ENCODE measurements at regions of chr16 and their contacts with region 1.

Region 1: DNA sequence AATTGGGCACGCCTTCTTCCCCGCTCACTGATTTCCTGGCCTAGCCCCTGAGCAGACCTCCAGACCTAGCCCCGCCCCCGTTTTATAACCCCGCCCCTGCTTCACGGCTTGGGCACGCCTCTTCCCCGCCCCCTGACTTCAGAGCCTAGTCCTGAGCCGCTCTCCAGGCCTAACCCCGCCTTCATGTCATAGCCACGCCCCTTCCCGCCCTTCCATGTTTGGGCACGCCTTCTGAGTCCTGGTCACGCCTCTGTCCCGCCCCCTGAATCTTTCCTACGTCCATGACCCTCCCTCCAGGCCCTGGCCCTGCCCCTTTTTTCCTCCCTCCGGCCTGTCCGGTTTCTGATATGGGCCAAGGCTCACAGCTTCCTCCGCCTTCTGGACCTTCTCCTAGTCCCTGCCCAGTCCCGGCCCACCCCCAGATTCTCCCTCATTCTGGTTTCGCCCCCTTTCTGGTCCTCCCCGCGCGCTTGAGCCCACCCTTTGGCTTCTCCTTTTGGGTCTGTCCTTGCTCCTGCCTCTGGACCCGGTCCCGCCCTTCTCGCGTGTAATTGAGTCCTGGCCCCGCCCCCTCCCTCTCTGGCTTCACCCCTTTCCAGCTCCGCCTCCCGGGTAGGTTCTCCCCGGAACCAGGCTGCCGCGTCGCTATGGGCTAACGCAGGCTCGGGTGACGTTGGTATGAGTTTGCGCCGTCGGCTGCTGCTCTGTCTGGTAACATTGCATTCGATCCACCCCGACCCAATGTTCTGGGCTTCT is 15.1 kb upstream of the EEF2K start:
- DNase-seq: peak; percentile 100
- H3K4me3 ChIP-seq: peak overlapping the region; percentile 65 to 72
- H3K27ac ChIP-seq: peak overlapping the region; percentile 81 to 94
- H3K4me1 ChIP-seq: peaks cover 0 to 33% (median 25%) of the 10 kb centered on the region in 4 donors
- H3K27me3 ChIP-seq: no peaks in the 10 kb centered on the region
- CTCF ChIP-seq: peak in 1 of 2 experiments; percentile 5

Region 2: GRCh38 chr16:22007509-22008214 is 183.3 kb before region 1 on chr16 and contains the start of gene MOSMO:
- intact Hi-C with region 1: loop called (anchors 5 kb)
- DNase-seq: peak; percentile 65 to 82
- H3K4me3 ChIP-seq: peak within 1 kb of the TSS; percentile 94 to 99
- H3K27ac ChIP-seq: peak within 1 kb of the TSS; percentile 76 to 96
- H3K4me1 ChIP-seq: peaks cover 0 to 31% (median 15%) of the 10 kb centered on the region in 4 donors
- H3K27me3 ChIP-seq: no peaks in the 10 kb centered on the region
- CTCF ChIP-seq: no peak

Region 3: DNA sequence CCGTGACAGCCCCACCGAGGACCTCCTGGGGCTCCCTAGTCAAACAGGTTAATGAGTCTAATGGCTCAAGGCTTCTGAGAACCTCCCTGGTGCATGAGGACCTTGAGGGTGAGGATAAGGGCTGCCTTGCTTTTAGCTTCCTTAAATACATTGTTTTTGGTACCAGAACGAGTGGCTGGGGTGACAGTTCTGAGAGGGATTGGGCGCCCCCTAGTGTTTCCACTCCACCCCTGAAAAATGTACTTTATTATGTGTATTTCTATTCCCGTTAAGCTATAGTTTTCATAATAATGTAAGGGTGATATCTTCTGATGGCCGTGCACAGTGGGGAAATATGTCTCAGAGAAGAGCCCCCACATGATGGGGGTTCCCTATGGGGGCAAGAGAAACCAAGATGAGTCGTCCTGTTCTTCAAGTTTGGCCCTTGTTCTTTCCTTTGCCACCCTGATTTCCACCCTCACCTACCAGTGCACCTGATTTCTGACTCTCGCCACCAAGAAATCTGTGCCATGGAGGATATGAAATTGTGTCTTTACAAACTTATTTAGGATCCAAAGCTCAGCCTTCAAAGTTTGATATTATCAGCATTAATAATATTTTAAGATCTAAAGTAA is 113.1 kb before region 1 on chr16:
- intact Hi-C with region 1: loop called (anchors 10 kb)
- DNase-seq: peak; percentile 60 to 69
- H3K4me3 ChIP-seq: no peak overlapping the region
- H3K27ac ChIP-seq: no peak overlapping the region
- H3K4me1 ChIP-seq: no peaks in the 10 kb centered on the region
- H3K27me3 ChIP-seq: no peaks in the 10 kb centered on the region
- CTCF ChIP-seq: peak; percentile 62 to 75

Region 4: GRCh38 chr16:22321339-22322001 is 130.5 kb after region 1 on chr16:
- intact Hi-C with region 1: no loop called
- DNase-seq: peak in 1 of 2 donors; percentile 60
- H3K4me3 ChIP-seq: no peak overlapping the region
- H3K27ac ChIP-seq: no peak overlapping the region
- H3K4me1 ChIP-seq: no peaks in the 10 kb centered on the region
- H3K27me3 ChIP-seq: no peaks in the 10 kb centered on the region
- CTCF ChIP-seq: peak; percentile 88 to 92

Region 5: DNA sequence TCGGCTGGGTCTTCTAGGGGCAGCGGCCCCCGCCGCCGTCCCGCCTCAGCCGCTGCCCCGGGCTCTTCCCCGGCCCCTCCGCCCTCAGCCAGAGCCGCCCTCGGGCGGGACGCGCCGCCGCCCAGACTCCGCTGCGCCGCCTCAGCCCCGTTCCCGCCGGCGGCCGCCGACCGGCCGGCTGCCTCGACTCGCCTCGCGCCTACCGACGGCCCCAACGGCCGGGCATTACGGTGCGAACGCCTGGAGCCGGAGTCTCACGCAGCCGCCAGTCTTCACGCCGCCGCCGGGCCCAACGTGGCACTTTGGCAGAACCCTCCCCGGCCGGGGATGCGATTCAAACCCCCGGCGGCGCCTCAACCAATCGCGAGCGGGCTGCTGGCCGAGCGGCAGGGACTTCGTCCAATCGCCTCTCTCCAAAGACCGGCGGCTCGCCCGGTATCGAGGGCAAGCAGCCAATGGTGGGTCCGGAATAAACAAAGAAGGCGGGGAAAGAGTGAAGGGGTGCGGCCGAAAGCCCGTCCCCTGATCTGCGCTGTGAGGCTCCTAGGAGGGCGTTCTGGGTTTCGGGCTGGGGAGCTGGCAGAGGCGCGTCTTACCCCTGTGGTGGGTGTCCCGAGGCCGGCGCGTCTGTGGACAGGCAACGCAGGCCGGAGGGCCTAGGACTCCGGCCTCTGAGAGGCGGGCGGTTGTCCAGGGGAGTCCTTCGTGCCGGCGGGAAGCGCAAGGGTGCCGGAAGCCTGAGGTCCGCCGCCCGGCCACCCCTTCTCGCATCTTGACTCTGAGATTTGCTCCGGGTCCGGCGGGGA is 183.6 kb after region 1 on chr16 and contains the start of gene CDR2:
- intact Hi-C with region 1: loop called (anchors 10 kb)
- DNase-seq: peak; percentile 98 to 99
- H3K4me3 ChIP-seq: peak within 1 kb of the TSS; percentile 79 to 92
- H3K27ac ChIP-seq: peak within 1 kb of the TSS; percentile 91 to 93
- H3K4me1 ChIP-seq: peaks cover 0 to 42% (median 31%) of the 10 kb centered on the region in 4 donors
- H3K27me3 ChIP-seq: no peaks in the 10 kb centered on the region
- CTCF ChIP-seq: peak in 1 of 2 experiments; percentile 5

Measured in tibial artery (tissue), 4 donors.